PC-9 (cell line): ENCODE measurements at regions of chr13 and their contacts with region 1.

Region 1: GRCh38 chr13:104318121-104318520 is 1251.9 kb upstream of the SLC10A2 start:
- DNase-seq: no peak
- H3K4me3 ChIP-seq: no peak overlapping the region
- H3K27ac ChIP-seq: no peak overlapping the region
- H3K4me1 ChIP-seq: peaks cover 15% of the 10 kb centered on the region
- H3K27me3 ChIP-seq: no peaks in the 10 kb centered on the region
- CTCF ChIP-seq: peak; percentile 55; the same call in 1 of the 2 replicates

Region 2: DNA sequence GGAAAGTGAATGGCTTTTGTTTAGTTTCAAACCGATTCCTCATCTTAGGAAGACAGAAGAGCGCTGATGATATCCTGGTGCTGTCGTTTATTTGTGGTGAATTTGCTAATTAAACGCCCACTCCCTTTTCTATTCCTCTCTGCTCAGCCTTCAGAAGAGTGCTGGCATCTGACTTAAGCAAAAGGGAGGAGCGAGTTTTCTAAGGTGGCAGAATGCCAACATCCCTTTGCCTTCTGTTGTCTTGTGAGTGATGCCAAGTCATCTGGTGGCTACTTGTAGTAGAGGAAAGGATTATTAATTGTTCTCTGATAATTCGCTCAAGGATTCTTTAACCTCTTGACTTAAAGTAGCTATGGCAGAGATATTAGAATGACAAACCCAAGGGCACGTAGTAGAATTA is 1404.2 kb before region 1 on chr13:
- CTCF ChIA-PET with region 1: no interaction called
- POLR2A ChIA-PET with region 1: no interaction called
- intact Hi-C with region 1: loop called (anchors 1 kb)
- DNase-seq: peak in 1 of 2 experiments; percentile 6
- H3K4me3 ChIP-seq: no peak overlapping the region
- H3K27ac ChIP-seq: no peak overlapping the region
- H3K4me1 ChIP-seq: peaks cover 50% of the 10 kb centered on the region
- H3K27me3 ChIP-seq: no peaks in the 10 kb centered on the region
- CTCF ChIP-seq: no peak

Region 3: DNA sequence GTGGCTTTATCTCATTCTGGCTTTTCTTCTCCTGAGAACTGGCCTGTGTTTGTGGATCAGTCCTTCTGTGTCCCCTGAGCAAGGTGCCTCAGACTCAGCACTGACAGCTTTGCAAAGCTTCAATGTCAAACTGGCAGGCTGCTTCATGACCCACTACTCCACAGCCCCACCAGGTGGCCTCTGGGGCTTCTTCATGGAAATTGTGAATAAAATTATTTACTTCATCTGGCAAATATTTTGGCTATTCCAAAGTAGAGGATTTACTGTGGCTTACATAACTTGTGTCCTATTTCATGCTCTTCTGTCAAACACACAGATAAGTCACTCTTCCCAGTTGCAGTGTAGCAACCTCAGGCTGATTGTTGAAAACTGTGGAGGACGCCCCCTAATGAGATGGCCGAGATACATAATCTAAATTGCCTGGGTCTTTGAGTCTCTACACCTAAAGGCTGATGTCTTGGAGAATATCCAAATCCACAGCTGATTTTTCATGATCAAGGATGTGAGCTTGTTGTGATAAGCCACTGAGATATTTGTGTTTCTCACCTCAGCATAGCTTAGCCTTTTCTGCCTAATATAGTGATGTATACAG is 530.0 kb before region 1 on chr13:
- CTCF ChIA-PET with region 1: no interaction called
- POLR2A ChIA-PET with region 1: no interaction called
- intact Hi-C with region 1: no loop called
- DNase-seq: peak in 1 of 2 experiments; percentile 8
- H3K4me3 ChIP-seq: no peak overlapping the region
- H3K27ac ChIP-seq: no peak overlapping the region
- H3K4me1 ChIP-seq: no peaks in the 10 kb centered on the region
- H3K27me3 ChIP-seq: no peaks in the 10 kb centered on the region
- CTCF ChIP-seq: peak; percentile 56; the same call in 1 of the 2 replicates

Region 4: GRCh38 chr13:104106705-104107393 is 211.3 kb before region 1 on chr13:
- CTCF ChIA-PET with region 1: no interaction called
- POLR2A ChIA-PET with region 1: no interaction called
- intact Hi-C with region 1: loop called (anchors 1 kb)
- DNase-seq: peak; percentile 27 to 74
- H3K4me3 ChIP-seq: no peak overlapping the region
- H3K27ac ChIP-seq: peak overlapping the region; percentile 71
- H3K4me1 ChIP-seq: peaks cover 14% of the 10 kb centered on the region
- H3K27me3 ChIP-seq: no peaks in the 10 kb centered on the region
- CTCF ChIP-seq: no peak

Region 5: DNA sequence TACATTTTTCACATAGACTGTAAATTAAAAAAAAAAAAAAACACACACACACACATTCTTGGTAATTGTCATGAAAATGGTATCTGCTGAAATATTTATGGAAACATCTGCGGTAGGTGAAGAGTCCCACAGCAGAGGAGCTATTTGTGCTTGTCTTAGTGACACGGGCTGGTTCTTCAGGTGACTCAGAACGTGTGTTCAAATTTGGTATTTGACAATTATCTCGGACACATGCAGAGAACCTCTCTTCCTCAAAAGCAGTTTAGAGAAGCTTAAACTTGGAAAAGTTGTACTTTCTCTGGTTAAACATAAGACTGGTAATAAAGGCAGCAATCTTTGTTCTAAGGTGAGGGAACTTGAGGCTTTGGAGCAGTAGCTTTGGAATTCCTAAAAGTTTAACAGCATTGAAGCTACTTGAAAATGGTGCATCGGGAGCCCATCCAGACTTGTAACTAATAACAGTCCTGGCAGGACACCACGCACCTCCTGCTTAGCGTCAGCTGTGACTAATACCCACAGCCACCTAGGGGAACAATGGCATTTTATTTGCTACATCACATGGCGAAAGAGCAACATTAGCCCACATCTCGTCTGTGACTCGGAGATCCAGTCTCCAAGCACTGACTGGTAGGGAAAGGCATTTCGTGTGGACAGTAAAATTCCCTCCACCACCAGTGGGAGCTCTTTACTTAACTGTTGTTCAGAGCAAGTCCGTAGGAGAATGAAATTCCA is 253.2 kb after region 1 on chr13:
- CTCF ChIA-PET with region 1: interaction called, 3 read pairs
- POLR2A ChIA-PET with region 1: no interaction called
- intact Hi-C with region 1: loop called (anchors 5 kb)
- DNase-seq: peak; percentile 72 to 75
- H3K4me3 ChIP-seq: peak overlapping the region; percentile 26; the same call in 1 of the 2 replicates
- H3K27ac ChIP-seq: no peak overlapping the region
- H3K4me1 ChIP-seq: peaks cover 7% of the 10 kb centered on the region; the same call in 1 of the 2 replicates
- H3K27me3 ChIP-seq: no peaks in the 10 kb centered on the region
- CTCF ChIP-seq: peak; percentile 78

Region 6: GRCh38 chr13:105598529-105598928 is 1280.4 kb after region 1 on chr13:
- CTCF ChIA-PET with region 1: no interaction called
- POLR2A ChIA-PET with region 1: no interaction called
- intact Hi-C with region 1: loop called (anchors 10 kb)
- DNase-seq: no peak
- H3K4me3 ChIP-seq: no peak overlapping the region
- H3K27ac ChIP-seq: no peak overlapping the region
- H3K4me1 ChIP-seq: no peaks in the 10 kb centered on the region
- H3K27me3 ChIP-seq: no peaks in the 10 kb centered on the region
- CTCF ChIP-seq: no peak